AG04450 (cell line): ENCODE measurements at regions of chrX and their contacts with region 1.

Region 1: DNA sequence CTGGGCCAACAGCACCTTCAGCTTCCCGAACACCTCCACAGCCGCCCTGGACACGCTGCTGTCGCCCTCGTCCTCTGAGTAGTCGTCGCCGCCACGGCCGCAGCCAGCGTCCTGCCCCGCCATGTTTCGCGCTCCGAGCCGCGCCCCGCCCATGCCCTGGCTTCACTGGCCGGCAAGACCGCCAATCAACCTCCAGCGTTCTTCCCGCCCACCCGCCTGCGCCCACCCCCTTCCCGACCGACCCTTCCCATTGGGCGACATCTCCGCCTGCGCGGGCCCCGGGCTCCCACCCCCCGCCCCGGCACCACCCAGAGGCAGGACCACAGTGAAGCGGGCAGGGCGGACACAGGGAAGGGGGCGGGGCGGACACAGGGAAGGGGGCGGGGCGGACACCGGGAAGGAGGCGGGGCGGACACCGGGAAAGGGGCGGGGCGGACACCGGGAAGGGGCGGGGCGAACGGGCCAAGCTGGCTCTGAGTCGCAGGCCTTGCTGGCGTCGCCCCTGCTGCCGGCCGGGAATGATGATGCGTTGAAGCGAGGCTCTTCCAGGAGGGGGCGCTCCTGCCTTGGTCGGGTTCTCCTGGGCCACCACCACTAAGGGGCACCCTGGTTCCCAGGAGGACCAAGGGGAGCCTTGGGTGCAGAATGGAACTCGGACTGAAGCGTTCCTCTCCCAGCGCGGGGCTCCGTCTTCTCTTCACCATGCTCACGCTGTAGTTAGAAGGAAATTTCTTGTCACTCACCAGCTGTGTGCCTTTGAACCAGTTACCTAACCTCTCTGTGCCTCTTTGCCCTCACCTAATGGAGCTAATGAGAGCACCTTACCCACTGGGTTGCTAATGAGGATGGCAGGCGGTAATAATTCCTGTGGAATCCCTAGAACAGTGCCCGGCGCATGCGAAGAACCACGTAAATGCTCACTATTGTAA is at the start of gene HAUS7:
- DNase-seq: peak; percentile 70
- H3K4me3 ChIP-seq: peak within 1 kb of the TSS; percentile 67
- H3K27ac ChIP-seq: no peak within 1 kb of the TSS
- H3K27me3 ChIP-seq: no peaks in the 10 kb centered on the region
- CTCF ChIP-seq: peak; percentile 69
- polyA plus RNA-seq, gene HAUS7: 13.2 and 16.5 TPM in 2 replicates

Region 2: DNA sequence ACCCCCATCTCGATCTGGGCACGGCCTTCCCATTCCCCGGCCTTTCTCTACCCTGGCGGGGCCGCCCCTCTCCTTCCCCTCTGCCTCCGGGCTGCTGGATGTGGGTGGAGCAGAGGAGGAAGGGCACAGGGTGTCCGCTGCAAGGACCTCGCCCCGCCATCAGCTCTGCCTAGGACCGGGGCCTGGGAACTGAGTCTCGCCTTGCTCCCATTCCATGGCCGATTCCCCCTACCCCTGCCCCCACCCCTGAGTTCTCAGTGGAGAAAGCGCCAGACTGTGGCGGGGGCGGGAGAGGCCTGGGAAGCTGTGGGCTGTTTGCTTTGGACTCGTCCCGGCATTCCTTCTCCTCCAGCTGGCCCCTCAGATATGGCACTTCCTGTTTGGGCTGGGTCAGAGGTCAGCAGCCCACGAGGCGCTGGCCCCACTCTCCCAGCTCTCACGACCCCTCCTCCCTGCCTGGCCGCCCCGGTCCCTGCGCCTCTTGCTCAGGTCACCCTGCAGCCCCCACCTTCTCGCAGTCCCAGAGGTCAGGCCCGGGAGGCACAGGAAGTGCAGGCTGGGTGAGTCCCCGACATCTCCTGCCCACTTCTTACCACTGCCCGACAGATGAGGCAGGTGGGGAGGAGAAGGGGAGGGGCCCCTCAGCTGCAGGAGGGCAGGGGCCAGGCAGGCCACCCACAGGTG is 17.7 kb after region 1 on chrX:
- CTCF ChIA-PET with region 1: interaction called, 18 read pairs
- POLR2A ChIA-PET with region 1: interaction called, 4 read pairs
- DNase-seq: no peak
- H3K4me3 ChIP-seq: no peak overlapping the region
- H3K27ac ChIP-seq: peak overlapping the region; percentile 39
- H3K27me3 ChIP-seq: no peaks in the 10 kb centered on the region
- CTCF ChIP-seq: no peak

Region 3: GRCh38 chrX:153494541-153495361 is 24.1 kb after region 1 on chrX and contains the start of gene BGN:
- CTCF ChIA-PET with region 1: interaction called, 46 read pairs
- POLR2A ChIA-PET with region 1: interaction called, 8 read pairs
- DNase-seq: no peak
- H3K4me3 ChIP-seq: peak within 1 kb of the TSS; percentile 73
- H3K27ac ChIP-seq: peak within 1 kb of the TSS; percentile 31
- H3K27me3 ChIP-seq: no peaks in the 10 kb centered on the region
- CTCF ChIP-seq: peak; percentile 45
- polyA plus RNA-seq, gene BGN: 97.2 and 143 TPM in 2 replicates

Region 4: GRCh38 chrX:153708415-153708814 is 237.7 kb after region 1 on chrX:
- CTCF ChIA-PET with region 1: no interaction called
- POLR2A ChIA-PET with region 1: no interaction called
- DNase-seq: peak; percentile 33
- H3K4me3 ChIP-seq: no peak overlapping the region
- H3K27ac ChIP-seq: no peak overlapping the region
- H3K27me3 ChIP-seq: no peaks in the 10 kb centered on the region
- CTCF ChIP-seq: peak; percentile 64